HCT116 (cell line): ENCODE measurements at regions of chr10 and their contacts with region 1.

Region 1: GRCh38 chr10:68301790-68302502 is 29.9 kb upstream of the HNRNPH3 start:
- DNase-seq: peak; percentile 49
- ATAC-seq: peak; percentile 90
- H3K4me3 ChIP-seq: no peak overlapping the region
- H3K27ac ChIP-seq: no peak overlapping the region
- H3K4me1 ChIP-seq: no peaks in the 10 kb centered on the region
- H3K27me3 ChIP-seq: no peaks in the 10 kb centered on the region
- CTCF ChIP-seq: peak; percentile 46 to 75 (median 61)
- POLR2A ChIP-seq: no peak
- RAD21 ChIP-seq: peak; percentile 81

Region 2: DNA sequence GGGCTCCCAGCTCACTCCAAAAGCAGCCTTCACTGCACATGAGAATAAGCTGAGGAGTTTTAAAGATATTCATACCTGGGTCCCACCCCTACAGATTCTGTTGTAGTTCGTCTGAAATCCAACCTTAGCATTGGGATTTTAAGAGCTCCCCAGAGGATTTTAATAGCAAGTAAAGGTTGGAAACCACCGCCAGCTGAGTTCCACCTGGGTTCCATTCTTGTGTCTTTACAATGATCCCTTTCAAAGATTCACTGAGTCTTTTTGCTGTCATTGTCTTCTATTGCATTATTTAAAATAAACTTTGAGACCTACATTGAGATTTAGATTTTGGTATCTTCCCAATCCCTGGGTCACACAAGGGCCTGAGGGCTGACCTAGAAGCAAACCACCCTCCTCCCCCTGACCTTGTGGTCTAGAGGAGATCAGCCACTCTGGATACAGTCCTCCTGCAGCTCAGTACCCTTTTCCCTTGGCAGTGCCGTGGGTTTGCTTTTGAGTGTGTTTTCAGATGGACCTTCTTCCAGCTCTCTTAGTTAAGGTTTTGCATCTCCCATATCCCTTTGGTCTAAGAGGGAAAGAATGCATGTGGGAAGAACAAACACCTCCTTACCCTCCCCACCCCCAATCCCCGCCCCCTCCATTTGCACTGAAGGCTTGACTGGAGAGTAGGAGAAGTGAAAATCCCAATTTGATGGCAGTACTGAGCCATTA is 440.0 kb before region 1 on chr10:
- CTCF ChIA-PET with region 1: interaction called, 20 read pairs
- POLR2A ChIA-PET with region 1: no interaction called
- RAD21 ChIA-PET with region 1: no interaction called
- intact Hi-C with region 1: no loop called
- DNase-seq: no peak
- ATAC-seq: no peak
- H3K4me3 ChIP-seq: no peak overlapping the region
- H3K27ac ChIP-seq: no peak overlapping the region
- H3K4me1 ChIP-seq: no peaks in the 10 kb centered on the region
- H3K27me3 ChIP-seq: no peaks in the 10 kb centered on the region
- CTCF ChIP-seq: no peak
- POLR2A ChIP-seq: no peak
- RAD21 ChIP-seq: no peak

Region 3: GRCh38 chr10:68082872-68083271 is 219.1 kb before region 1 on chr10:
- CTCF ChIA-PET with region 1: interaction called, 4 read pairs
- POLR2A ChIA-PET with region 1: no interaction called
- RAD21 ChIA-PET with region 1: interaction called in 1 of 2 experiments, 4 read pairs
- intact Hi-C with region 1: loop called (anchors 5 kb)
- DNase-seq: no peak
- ATAC-seq: peak; percentile 52; the same call in 1 of the 2 replicates
- H3K4me3 ChIP-seq: no peak overlapping the region
- H3K27ac ChIP-seq: no peak overlapping the region
- H3K4me1 ChIP-seq: peaks cover 11 to 30% of the 10 kb centered on the region in 2 experiments
- H3K27me3 ChIP-seq: no peaks in the 10 kb centered on the region
- CTCF ChIP-seq: peak; percentile 32 to 84 (median 69); a peak in 5 of 6 replicates
- POLR2A ChIP-seq: no peak
- RAD21 ChIP-seq: peak; percentile 87